ENCODE measurements at regions of chr19 and their contacts with region 1.

Region 1: DNA sequence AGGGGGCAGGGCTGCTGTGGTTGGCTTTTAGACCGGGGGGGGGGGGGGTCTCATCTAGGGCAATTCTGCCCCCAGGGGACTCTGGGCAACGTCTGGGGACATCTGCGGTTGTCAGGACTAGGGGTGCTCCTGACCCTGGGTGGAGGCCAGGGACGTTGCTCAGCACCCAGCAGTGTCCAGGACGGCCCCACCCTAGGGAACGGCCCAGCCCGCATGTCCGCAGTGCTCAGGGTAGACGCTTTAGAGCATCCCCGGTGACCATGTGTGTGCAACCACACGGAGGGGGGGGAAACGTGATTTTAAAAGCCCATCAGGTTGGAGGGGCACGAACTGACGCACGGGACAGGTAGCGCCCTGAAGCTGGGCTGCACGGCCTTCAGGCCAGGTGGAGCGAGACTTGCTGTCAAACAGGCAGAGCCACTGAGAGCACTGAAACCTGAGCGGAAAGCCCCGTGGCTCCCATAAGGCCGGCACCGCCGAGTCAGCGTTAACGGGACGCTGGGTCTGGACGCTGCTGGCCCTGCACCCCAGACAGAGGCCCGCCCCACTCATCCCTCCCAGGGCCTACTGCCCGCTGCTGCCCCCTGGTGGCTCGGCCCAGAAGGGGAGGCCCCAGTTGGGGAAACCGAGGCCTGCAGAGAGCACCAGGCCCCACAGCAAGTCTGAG is 8.3 kb downstream of the CACTIN start:
- DNase-seq: peak; percentile 79 to 93 (median 89)
- ATAC-seq: peak; percentile 93
- H3K4me3 ChIP-seq: no peak overlapping the region
- H3K27ac ChIP-seq: no peak overlapping the region
- H3K4me1 ChIP-seq: peaks cover 4 to 76% of the 10 kb centered on the region in 2 experiments
- H3K27me3 ChIP-seq: no peaks in the 10 kb centered on the region
- CTCF ChIP-seq: peak; percentile 87 to 95 (median 91)
- EP300 ChIP-seq: no peak
- POLR2A ChIP-seq: no peak
- RAD21 ChIP-seq: peak; percentile 88 to 96

Region 2: GRCh38 chr19:3586124-3586626 is 32.1 kb before region 1 on chr19:
- CTCF ChIA-PET with region 1: interaction called, 8 read pairs
- POLR2A ChIA-PET with region 1: interaction called, 4 read pairs
- in situ Hi-C with region 1: no loop called
- intact Hi-C with region 1: loop called (anchors 1 kb)
- DNase-seq: peak; percentile 62 to 74 (median 71)
- ATAC-seq: peak; percentile 82
- H3K4me3 ChIP-seq: peak overlapping the region; percentile 42
- H3K27ac ChIP-seq: no peak overlapping the region; the same call in 2 of the 3 replicates
- H3K4me1 ChIP-seq: peaks cover 0 to 26% of the 10 kb centered on the region in 2 experiments; a peak in 2 of 5 replicates
- H3K27me3 ChIP-seq: no peaks in the 10 kb centered on the region
- CTCF ChIP-seq: peak; percentile 78 to 82 (median 79)
- EP300 ChIP-seq: no peak
- POLR2A ChIP-seq: no peak
- RAD21 ChIP-seq: peak; percentile 74 to 87

Measured in K562 (cell line).